Adrenal gland (tissue), 19 donors: ENCODE measurements at regions of chr2 and their contacts with region 1.

Region 1: DNA sequence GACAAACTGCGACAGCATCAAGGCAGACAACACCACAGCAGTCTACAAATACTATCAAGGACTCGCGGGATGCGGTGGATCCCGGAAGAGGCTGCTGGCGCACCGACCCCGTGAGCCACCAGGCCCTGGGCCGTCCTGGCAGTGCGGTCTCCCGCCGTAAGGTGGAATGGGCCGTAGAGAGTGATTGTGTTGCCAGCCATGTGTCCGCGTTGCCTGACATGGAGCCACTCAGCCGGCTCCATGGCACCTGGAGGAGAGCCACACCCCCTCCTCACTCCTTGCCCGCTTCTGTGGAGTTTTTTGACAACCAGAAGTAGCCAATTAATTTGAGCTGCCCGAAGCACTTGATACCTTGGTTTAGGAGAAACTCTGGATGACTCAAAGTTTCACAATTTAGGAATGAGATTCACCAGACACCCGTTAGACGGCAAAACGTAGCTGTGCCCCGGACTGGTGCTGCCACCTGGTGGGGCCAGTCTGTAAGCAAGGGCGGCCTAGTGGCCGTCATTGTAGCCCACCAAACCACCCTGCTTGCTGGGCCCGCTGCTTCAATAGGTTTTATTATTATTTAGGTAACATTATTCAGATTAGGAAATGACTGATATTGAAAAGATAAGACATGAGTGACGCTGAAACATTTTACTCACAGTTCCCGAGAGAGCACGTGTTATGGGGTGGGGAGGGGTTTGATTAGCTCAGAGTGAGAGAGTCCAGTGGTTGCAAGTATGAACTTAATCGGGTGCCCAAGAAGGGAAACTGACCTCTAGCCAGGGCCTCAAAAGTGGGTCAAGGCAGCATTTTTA is 10.2 kb upstream of the IMP4 start:
- DNase-seq: peak; percentile 75 to 87 (median 79)
- H3K4me3 ChIP-seq: no peak overlapping the region
- H3K27ac ChIP-seq: no peak overlapping the region
- H3K4me1 ChIP-seq: peaks cover 0 to 3% of the 10 kb centered on the region in 2 donors
- H3K27me3 ChIP-seq: peaks cover 4% of the 10 kb centered on the region
- CTCF ChIP-seq: peak; percentile 81 to 96 (median 94)
- POLR2A ChIP-seq: no peak

Region 2: DNA sequence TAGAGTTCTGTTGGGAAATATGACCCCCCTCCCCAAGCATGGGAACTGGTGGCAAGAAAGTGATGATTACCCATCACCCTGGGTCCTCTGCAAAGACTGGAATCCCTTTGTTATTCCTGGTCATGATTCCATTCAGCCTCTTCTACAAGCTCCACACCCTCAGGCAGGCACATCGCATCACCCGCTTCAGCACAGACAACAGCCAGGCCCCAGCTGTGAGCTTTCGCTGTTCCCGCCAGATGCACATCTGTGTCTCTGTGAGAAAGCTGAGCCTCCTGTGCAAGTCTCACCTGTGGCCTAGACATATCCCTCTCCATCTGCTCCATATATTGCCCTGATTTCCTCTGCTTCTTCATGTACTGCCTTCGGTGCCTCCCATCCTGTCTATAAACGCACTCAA is 721.0 kb before region 1 on chr2:
- intact Hi-C with region 1: no loop called
- DNase-seq: no peak
- H3K4me3 ChIP-seq: no peak overlapping the region
- H3K27ac ChIP-seq: no peak overlapping the region
- H3K4me1 ChIP-seq: no peaks in the 10 kb centered on the region
- H3K27me3 ChIP-seq: no peaks in the 10 kb centered on the region
- CTCF ChIP-seq: no peak
- POLR2A ChIP-seq: no peak

Region 3: DNA sequence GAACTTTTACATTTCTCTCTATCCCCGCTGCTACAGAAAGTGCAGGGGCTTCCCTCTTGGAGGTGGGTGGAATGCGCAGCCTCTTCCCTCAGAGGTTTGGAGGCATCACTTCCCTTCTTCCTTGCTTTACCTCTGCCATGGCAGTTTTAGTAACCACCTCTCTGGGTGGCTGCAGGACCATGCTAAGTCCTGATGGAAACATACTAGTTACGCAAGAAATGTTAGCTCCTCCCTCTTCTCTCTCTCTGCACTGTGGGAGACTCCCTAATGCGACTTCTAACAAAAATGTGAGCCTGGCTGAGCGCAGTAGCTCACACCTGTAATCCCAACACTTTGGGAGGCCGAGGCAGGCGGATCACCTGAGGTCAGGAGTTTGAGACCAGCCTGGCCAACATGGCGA is 469.8 kb before region 1 on chr2:
- intact Hi-C with region 1: loop called in 1 of 2 experiments (anchors 10 kb)
- DNase-seq: no peak
- H3K4me3 ChIP-seq: no peak overlapping the region
- H3K27ac ChIP-seq: no peak overlapping the region
- H3K4me1 ChIP-seq: no peaks in the 10 kb centered on the region
- H3K27me3 ChIP-seq: no peaks in the 10 kb centered on the region
- CTCF ChIP-seq: no peak
- POLR2A ChIP-seq: no peak

Region 4: GRCh38 chr2:129936334-129936934 is 396.0 kb before region 1 on chr2:
- intact Hi-C with region 1: loop called in 1 of 2 experiments (anchors 10 kb)
- DNase-seq: peak in 3 of 7 donors; percentile 40 to 72 (median 66)
- H3K4me3 ChIP-seq: no peak overlapping the region
- H3K27ac ChIP-seq: no peak overlapping the region
- H3K4me1 ChIP-seq: no peaks in the 10 kb centered on the region
- H3K27me3 ChIP-seq: peaks cover 6% of the 10 kb centered on the region
- CTCF ChIP-seq: peak in 3 of 6 experiments; percentile 40 to 49 (median 43)
- POLR2A ChIP-seq: no peak

Region 5: DNA sequence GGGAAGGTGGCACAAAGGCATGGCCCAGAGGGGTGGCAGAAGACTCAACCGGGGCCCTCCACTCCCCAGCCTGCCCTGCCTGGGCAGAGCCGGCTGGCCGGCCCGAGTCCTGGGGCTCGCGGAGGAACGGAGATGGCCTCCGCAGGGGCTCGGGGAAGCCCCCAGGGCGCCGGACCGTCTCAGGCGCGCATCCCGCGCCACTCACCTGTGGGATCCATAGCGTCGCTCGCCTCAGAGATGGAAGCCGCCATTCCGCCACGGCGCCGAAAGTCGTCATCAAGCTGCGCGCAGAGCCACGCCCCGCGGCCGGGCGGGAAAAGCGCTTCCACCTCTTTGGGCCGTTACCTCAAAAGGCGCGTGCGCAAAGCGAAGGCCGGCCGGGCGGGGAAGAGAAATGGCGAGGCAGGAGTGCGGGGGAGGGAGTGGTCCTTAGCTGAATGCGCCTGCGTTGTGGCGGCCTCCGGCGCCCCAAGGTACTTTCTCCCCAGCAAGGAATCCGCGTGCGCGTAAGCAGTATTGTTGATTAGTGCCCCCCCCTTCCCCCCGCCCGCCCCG is 151.1 kb before region 1 on chr2 and contains the start of gene SMPD4:
- intact Hi-C with region 1: loop called in 1 of 2 experiments (anchors 10 kb)
- DNase-seq: peak; percentile 97 to 98 (median 98)
- H3K4me3 ChIP-seq: peak within 1 kb of the TSS; percentile 19 to 98 (median 92)
- H3K27ac ChIP-seq: peak within 1 kb of the TSS; percentile 71 to 93 (median 91)
- H3K4me1 ChIP-seq: peaks cover 14 to 18% of the 10 kb centered on the region in 2 donors
- H3K27me3 ChIP-seq: no peaks in the 10 kb centered on the region
- CTCF ChIP-seq: no peak
- POLR2A ChIP-seq: peak; percentile 19 to 42
- total RNA-seq, gene SMPD4: 23.7 to 85.4 (median 35.3) TPM